ENCODE measurements at regions of chr2 and their contacts with region 1.

Region 1: DNA sequence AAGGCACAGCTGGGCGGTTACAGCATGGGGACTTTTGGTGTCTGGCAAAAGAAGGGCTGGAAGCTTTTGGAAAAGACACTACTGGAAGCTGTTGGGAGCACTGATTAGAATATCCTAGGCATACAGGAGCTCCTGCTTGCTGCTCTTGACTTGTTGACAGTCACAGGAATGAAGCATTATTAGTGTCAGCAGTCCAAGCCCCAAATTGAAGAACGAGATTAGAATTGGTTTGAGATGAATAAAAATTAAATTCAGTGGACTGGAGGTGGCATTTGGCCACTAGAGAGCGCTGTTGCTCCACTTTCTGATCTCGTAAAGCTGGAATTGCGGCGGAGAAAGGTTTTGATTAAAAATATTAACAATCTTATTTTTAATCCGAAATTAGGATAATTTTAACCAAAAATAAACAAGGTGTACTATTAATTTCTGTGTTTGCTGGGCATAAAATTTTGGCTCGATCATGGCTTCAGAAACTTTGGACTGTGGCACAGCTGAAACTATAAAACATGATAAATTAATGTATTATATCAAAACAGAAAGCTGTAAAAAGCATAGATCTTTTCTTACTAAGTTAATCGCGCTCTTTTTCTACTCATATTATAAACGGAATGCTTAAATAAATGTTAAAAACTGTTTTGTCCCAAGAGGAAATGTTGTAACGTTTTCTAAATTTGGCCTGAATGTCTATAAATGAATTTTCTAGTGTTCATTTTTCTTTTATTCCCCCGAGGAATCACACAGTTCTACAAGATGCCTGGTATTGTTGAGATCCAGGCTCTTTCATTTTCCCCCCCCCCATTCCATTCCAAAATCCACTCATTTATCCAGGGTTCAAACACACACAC is 2.4 kb upstream of the HOXD8 start:
- DNase-seq: peak in 1 of 2 experiments; percentile 52
- ATAC-seq: 0 out of 6 replicates have a peak, but pooled peaks of 1 of the 2 experiments have one; percentile 10
- H3K4me3 ChIP-seq: no peak overlapping the region
- H3K27ac ChIP-seq: no peak overlapping the region
- H3K4me1 ChIP-seq: 0 out of 3 replicates have a peak, but pooled peaks cover 3% of the 10 kb centered on the region
- CTCF ChIP-seq: peak; percentile 96
- EP300 ChIP-seq: no peak
- POLR2A ChIP-seq: no peak
- RAD21 ChIP-seq: peak; percentile 87 to 91

Region 2: GRCh38 chr2:176110975-176111663 is 16.0 kb before region 1 on chr2:
- CTCF ChIA-PET with region 1: interaction called, 36 read pairs
- POLR2A ChIA-PET with region 1: no interaction called
- DNase-seq: peak; percentile 68 to 76
- ATAC-seq: peak; percentile 12 to 67; a peak in 4 of 6 replicates
- H3K4me3 ChIP-seq: no peak overlapping the region
- H3K27ac ChIP-seq: no peak overlapping the region
- H3K4me1 ChIP-seq: peaks cover 9% of the 10 kb centered on the region
- CTCF ChIP-seq: peak; percentile 82
- EP300 ChIP-seq: no peak
- POLR2A ChIP-seq: no peak
- RAD21 ChIP-seq: peak; percentile 37; a peak in 3 of 5 replicates

Region 3: GRCh38 chr2:176205126-176205525 is 78.0 kb after region 1 on chr2:
- CTCF ChIA-PET with region 1: no interaction called
- POLR2A ChIA-PET with region 1: no interaction called
- DNase-seq: no peak
- ATAC-seq: no peak
- H3K4me3 ChIP-seq: no peak overlapping the region
- H3K27ac ChIP-seq: no peak overlapping the region
- H3K4me1 ChIP-seq: no peaks in the 10 kb centered on the region
- CTCF ChIP-seq: no peak
- EP300 ChIP-seq: no peak
- POLR2A ChIP-seq: no peak
- RAD21 ChIP-seq: no peak

Region 4: GRCh38 chr2:176454893-176455811 is 328.0 kb after region 1 on chr2:
- CTCF ChIA-PET with region 1: interaction called, 10 read pairs
- POLR2A ChIA-PET with region 1: no interaction called
- DNase-seq: peak; percentile 31 to 59
- ATAC-seq: peak; percentile 87 to 93
- H3K4me3 ChIP-seq: no peak overlapping the region
- H3K27ac ChIP-seq: no peak overlapping the region
- H3K4me1 ChIP-seq: no peaks in the 10 kb centered on the region
- CTCF ChIP-seq: peak; percentile 90
- EP300 ChIP-seq: no peak
- POLR2A ChIP-seq: no peak
- RAD21 ChIP-seq: peak; percentile 83 to 86

Region 5: GRCh38 chr2:176554101-176555048 is 427.2 kb after region 1 on chr2:
- CTCF ChIA-PET with region 1: interaction called, 15 read pairs
- POLR2A ChIA-PET with region 1: no interaction called
- DNase-seq: peak; percentile 61 to 69
- ATAC-seq: peak; percentile 77 to 79
- H3K4me3 ChIP-seq: peak overlapping the region; percentile 46
- H3K27ac ChIP-seq: peak overlapping the region; percentile 77 to 90
- H3K4me1 ChIP-seq: no peaks in the 10 kb centered on the region
- CTCF ChIP-seq: peak; percentile 84
- EP300 ChIP-seq: no peak
- POLR2A ChIP-seq: no peak
- RAD21 ChIP-seq: peak; percentile 79 to 81

Region 6: DNA sequence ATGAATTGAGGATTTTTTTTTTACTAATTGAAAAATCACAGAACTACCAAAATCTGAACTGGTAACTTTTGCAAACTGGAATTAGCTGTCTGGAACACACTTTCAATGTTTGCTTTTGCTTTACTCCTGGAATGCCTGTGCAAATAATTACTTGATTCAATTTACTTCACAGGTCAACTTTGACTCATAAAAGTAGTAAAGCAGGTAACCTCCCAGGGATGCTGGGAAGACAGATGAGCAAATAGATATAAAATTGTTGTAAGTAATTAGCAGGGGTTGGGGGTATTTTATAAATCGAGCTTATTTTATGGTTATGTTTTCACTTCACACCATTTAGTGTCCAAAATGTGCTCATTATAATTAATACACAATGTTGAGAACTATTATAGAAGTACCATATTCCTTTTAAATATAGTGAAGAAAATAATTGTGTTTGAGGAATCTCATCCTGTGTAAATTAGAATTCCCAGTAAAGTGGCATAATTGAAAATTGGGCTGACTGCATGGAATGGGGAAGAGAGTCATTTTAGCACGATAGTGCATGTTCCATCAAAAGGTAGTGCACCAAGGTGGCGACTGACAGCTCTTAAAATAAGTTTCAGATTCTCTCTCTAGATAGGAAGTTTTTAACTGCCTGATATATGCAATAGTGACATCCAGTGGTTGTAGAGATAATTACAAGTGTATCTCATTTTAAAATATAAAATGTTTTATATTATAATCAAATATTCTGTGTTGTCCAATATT is 687.3 kb after region 1 on chr2:
- CTCF ChIA-PET with region 1: interaction called, 17 read pairs
- POLR2A ChIA-PET with region 1: no interaction called
- DNase-seq: peak; percentile 10 to 37
- ATAC-seq: peak in 1 of 2 experiments; percentile 53; a peak in 3 of 6 replicates
- H3K4me3 ChIP-seq: no peak overlapping the region
- H3K27ac ChIP-seq: no peak overlapping the region
- H3K4me1 ChIP-seq: no peaks in the 10 kb centered on the region
- CTCF ChIP-seq: peak; percentile 59
- EP300 ChIP-seq: no peak
- POLR2A ChIP-seq: no peak
- RAD21 ChIP-seq: peak; percentile 66

Region 7: DNA sequence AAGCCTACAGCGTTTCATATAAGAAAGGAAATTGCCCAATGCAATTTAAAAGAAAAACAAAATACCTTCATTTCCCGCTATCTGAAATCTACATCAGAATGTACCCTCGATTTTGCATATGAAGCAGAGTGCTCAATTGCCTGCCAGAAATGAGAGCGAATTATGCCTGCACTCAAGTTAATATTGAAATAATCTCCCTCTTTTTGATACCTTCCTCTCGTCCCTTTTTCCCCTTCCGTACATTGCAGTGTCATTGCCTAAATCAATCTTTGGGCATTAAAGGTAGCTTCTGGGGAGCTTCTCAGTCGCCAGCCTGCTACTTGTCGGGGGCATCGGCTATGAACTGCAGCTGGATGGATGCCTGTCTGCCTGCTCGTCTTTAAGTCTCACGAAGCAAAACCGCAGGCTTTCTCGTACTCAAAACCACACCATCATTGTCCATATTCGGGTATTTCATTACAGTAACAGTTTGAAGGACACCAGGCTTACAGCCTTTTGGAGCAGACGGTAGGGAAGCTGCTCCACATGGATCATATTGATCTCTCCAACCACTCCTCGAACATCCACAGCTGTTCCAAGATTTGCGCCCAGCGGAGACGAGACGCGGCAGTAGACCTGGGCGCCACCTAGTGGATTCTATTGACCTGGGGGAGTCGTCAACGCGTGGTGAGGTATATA is 1021.5 kb after region 1 on chr2:
- CTCF ChIA-PET with region 1: interaction called, 28 read pairs
- POLR2A ChIA-PET with region 1: no interaction called
- DNase-seq: peak; percentile 61 to 75
- ATAC-seq: peak; percentile 99
- H3K4me3 ChIP-seq: peak overlapping the region; percentile 48
- H3K27ac ChIP-seq: no peak overlapping the region
- H3K4me1 ChIP-seq: peaks cover 9% of the 10 kb centered on the region; the same call in 1 of the 3 replicates
- CTCF ChIP-seq: peak; percentile 85
- EP300 ChIP-seq: no peak
- POLR2A ChIP-seq: no peak
- RAD21 ChIP-seq: peak; percentile 63 to 68

Region 8: DNA sequence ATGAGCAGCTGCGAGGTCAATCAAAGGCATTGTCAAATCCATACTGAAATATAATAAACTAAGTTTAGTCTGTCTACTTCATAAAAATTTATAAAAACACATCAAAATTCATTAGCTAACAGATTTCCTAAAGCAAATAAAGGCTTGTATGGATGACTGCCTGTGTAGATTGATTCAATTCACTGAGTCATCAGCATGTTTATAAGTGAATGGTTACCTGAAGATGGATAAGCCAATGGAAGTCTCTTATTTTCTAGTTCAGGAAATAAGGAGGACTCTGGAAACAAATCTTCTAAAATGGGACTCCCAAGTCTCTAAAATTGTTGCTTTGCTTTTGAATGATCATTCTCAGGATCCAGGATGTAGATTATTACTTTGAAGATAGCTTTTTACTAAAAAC is 1028.5 kb after region 1 on chr2:
- CTCF ChIA-PET with region 1: interaction called, 24 read pairs
- POLR2A ChIA-PET with region 1: no interaction called
- DNase-seq: no peak
- ATAC-seq: no peak
- H3K4me3 ChIP-seq: no peak overlapping the region
- H3K27ac ChIP-seq: no peak overlapping the region
- H3K4me1 ChIP-seq: no peaks in the 10 kb centered on the region
- CTCF ChIP-seq: no peak
- EP300 ChIP-seq: no peak
- POLR2A ChIP-seq: no peak
- RAD21 ChIP-seq: no peak

Measured in A549 (cell line).